Activated CD8-positive, alpha-beta T cell treated with anti-CD3 and anti-CD28 coated beads for 36 hours (primary cell): ENCODE measurements at regions of chr19 and their contacts with region 1.

Region 1: DNA sequence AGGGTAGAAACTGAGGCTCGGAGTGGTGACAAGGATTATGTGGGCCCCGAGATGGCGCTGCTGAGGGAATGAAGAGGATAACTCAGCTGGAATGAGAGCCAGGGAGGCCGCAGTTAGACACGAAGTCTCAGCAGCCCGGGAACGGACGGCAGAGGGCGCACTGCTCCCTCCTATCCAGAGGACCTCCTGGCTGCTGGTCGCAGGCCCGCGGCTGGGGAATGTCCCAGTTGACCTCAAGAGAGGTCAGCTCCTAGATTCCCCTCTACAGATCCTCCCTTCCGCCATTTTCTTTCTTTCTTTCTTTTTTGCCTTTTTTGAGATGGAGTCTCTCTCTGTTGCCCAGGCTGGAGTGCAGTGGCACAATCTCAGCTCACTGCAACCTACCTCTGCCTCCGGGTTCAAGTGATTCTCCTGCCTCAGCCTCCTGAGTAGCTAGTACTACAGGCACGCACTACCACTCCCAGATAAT is 24.1 kb upstream of the ASPDH start:
- DNase-seq: peak; percentile 86
- ATAC-seq: peak; percentile 62
- H3K4me3 Mint-ChIP-seq: no peak overlapping the region
- H3K27ac Mint-ChIP-seq: no peak overlapping the region
- H3K4me1 Mint-ChIP-seq: no peaks in the 10 kb centered on the region
- H3K27me3 Mint-ChIP-seq: peaks cover 12% of the 10 kb centered on the region
- CTCF ChIP-seq: peak; percentile 91

Region 2: DNA sequence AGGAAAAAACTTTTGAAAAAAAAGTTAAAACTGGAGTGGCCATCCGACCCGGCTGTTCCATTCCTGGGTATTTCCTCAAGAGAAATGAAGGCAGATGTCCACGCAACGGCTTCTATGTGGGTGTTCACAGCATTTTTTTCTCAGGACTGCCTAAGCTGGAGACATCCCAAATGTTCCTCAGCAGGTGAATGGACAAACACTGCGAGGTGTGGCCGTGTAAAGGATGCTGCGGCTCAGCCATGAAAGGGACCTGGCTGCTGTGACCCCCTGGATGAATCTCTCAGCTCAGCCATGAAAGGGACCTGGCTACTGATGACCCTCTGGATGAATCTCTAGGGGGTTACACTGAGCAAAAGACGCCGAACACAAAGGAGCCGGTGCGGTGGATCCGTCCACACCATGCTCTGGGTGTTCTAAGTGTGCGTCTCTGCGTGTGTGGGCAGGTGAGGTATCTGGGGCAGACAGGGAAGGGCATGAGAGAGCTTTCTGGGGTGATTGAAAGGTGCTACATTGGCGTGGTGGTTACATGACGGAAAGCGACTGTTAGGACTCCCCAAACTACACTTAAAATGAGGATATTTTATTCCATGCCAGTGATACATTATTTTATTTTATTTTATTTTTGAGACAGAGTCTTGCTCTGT is 16.9 kb before region 1 on chr19:
- CTCF ChIA-PET with region 1: interaction called, 10 read pairs
- POLR2A ChIA-PET with region 1: no interaction called
- intact Hi-C with region 1: no loop called
- DNase-seq: no peak
- ATAC-seq: no peak
- H3K4me3 Mint-ChIP-seq: no peak overlapping the region
- H3K27ac Mint-ChIP-seq: no peak overlapping the region
- H3K4me1 Mint-ChIP-seq: no peaks in the 10 kb centered on the region
- H3K27me3 Mint-ChIP-seq: no peaks in the 10 kb centered on the region
- CTCF ChIP-seq: no peak

Region 3: GRCh38 chr19:50556282-50557008 is 18.6 kb after region 1 on chr19:
- CTCF ChIA-PET with region 1: interaction called, 60 read pairs
- POLR2A ChIA-PET with region 1: no interaction called
- intact Hi-C with region 1: no loop called
- DNase-seq: peak; percentile 91
- ATAC-seq: peak; percentile 89
- H3K4me3 Mint-ChIP-seq: peak overlapping the region; percentile 61
- H3K27ac Mint-ChIP-seq: no peak overlapping the region
- H3K4me1 Mint-ChIP-seq: peaks cover 7% of the 10 kb centered on the region
- H3K27me3 Mint-ChIP-seq: peaks cover 51% of the 10 kb centered on the region
- CTCF ChIP-seq: peak; percentile 97

Region 4: DNA sequence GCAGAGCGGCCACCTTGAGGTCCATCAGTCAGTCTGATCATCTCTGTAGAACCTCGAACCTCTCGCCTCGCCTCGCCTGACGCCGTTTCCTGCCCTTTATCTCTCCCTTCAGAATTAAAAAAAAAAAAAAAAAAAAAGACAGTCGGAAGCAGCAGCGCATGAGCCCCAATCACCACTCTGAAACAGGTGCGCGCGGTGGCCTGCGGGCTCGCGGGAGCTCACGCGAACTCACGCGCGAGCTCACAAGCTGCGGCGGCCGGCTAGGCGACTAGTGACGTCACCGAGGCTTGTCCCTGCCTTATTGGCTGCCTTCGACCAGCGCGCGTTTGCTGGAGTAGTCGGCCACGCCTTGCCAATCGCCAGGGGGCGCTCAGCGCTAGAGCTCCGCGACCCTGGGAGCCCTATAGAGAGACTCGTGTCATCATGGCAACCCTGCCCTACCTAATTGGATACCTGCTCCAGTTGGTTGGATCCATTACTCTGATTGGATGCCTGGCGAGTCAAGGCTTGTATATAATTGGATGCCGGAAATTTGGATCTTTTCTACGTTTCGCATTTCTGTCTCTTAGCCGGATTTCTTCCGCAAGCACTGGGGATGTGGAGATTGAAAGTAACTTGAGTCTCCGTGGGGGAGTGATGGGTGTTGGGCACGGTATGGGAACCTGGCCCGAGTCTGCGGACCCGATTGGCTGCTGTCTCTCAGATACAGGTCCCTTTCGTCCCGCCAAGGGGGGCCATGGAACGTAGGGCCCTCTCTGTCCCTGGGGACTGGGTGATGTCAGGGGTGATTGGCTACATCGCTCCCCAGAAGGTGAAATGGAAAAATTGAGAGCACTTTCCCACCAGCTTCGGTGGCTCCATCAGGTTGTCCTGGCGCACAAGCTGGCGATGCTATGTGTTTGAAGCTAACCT is 70.3 kb after region 1 on chr19:
- CTCF ChIA-PET with region 1: interaction called, 5 read pairs
- POLR2A ChIA-PET with region 1: no interaction called
- intact Hi-C with region 1: loop called (anchors 10 kb)
- DNase-seq: peak; percentile 92
- ATAC-seq: peak; percentile 94
- H3K4me3 Mint-ChIP-seq: peak overlapping the region; percentile 31
- H3K27ac Mint-ChIP-seq: no peak overlapping the region
- H3K4me1 Mint-ChIP-seq: peaks cover 8% of the 10 kb centered on the region
- H3K27me3 Mint-ChIP-seq: peaks cover 33% of the 10 kb centered on the region
- CTCF ChIP-seq: peak; percentile 63

Region 5: DNA sequence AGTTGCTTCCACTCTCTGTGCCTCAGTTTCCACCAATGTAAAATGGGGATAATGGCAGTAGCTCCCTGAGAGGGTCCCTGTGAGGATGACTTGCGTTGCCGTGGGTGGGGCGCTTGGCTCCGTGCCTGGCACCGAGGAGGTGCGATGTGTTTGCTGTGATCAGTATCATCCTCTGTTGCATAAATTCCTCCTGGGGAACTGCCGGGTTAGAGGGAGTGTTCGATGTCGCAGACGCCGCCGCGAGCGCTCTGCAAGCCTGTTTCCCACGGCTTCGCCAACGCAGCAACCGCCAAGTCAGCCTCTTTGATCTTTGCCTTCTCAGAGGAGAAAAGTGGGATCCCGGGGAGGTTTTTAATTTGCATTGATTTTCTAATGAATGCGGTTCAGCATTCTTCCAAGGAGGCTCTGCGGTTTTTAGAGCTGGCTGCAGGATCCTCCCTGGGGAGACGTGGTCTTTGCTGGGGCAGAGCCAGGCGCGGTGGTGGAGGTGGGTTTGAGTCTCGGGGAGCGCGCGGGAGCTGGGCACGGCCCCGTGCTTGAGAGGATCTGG is 240.0 kb after region 1 on chr19:
- CTCF ChIA-PET with region 1: interaction called, 16 read pairs
- POLR2A ChIA-PET with region 1: no interaction called
- intact Hi-C with region 1: loop called (anchors 10 kb)
- DNase-seq: no peak
- ATAC-seq: no peak
- H3K4me3 Mint-ChIP-seq: no peak overlapping the region
- H3K27ac Mint-ChIP-seq: no peak overlapping the region
- H3K4me1 Mint-ChIP-seq: no peaks in the 10 kb centered on the region
- H3K27me3 Mint-ChIP-seq: peaks cover 54% of the 10 kb centered on the region
- CTCF ChIP-seq: no peak

Region 6: DNA sequence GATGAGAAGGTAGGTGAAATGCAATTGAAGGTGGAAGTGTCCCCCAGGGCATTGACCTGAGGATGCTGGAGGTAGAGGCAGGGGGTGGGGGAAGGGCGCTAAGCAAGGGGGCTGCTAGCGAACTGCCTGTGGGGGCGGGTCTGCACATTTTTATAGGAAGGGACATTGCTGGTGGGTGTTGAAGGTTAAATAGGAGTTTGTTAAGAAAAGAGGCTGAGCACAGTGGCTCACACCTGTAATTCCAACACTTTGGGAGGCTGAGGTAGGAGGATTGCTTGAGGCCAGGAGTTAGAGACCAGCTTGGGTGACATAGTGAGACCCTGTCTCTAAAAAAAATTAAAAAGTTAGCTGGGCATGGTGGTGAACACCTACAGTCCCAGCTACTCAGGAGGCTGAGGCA is 246.9 kb after region 1 on chr19:
- CTCF ChIA-PET with region 1: interaction called, 16 read pairs
- POLR2A ChIA-PET with region 1: no interaction called
- intact Hi-C with region 1: loop called (anchors 10 kb)
- DNase-seq: no peak
- ATAC-seq: no peak
- H3K4me3 Mint-ChIP-seq: no peak overlapping the region
- H3K27ac Mint-ChIP-seq: no peak overlapping the region
- H3K4me1 Mint-ChIP-seq: no peaks in the 10 kb centered on the region
- H3K27me3 Mint-ChIP-seq: peaks cover 19% of the 10 kb centered on the region
- CTCF ChIP-seq: no peak